B cell (primary cell): ENCODE measurements at regions of chr1 and their contacts with region 1.

Region 1: GRCh38 chr1:206663832-206664652 is 20.7 kb upstream of the MAPKAPK2 start:
- DNase-seq: peak; percentile 86
- ATAC-seq: peak; percentile 80
- H3K4me3 ChIP-seq: peak overlapping the region in 2 of 5 experiments; percentile 31 to 34
- H3K4me3 Mint-ChIP-seq: peak overlapping the region; percentile 64
- H3K27ac ChIP-seq: no peak overlapping the region
- H3K27ac Mint-ChIP-seq: no peak overlapping the region
- H3K4me1 ChIP-seq: peaks cover 14 to 16% of the 10 kb centered on the region in 2 donors
- H3K4me1 Mint-ChIP-seq: peaks cover 24% of the 10 kb centered on the region
- H3K27me3 ChIP-seq: peaks cover 0 to 48% (median 15%) of the 10 kb centered on the region in 4 experiments
- H3K27me3 Mint-ChIP-seq: peaks cover 40% of the 10 kb centered on the region
- CTCF ChIP-seq: peak; percentile 89

Region 2: GRCh38 chr1:206489980-206490770 is 173.9 kb before region 1 on chr1:
- CTCF ChIA-PET with region 1: interaction called, 26 read pairs
- POLR2A ChIA-PET with region 1: no interaction called
- intact Hi-C with region 1: loop called (anchors 1 kb)
- DNase-seq: peak; percentile 73
- ATAC-seq: peak; percentile 80
- H3K4me3 ChIP-seq: no peak overlapping the region
- H3K4me3 Mint-ChIP-seq: no peak overlapping the region
- H3K27ac ChIP-seq: no peak overlapping the region
- H3K27ac Mint-ChIP-seq: no peak overlapping the region
- H3K4me1 ChIP-seq: peaks cover 4 to 5% of the 10 kb centered on the region in 2 donors
- H3K4me1 Mint-ChIP-seq: peaks cover 7% of the 10 kb centered on the region
- H3K27me3 ChIP-seq: no peaks in the 10 kb centered on the region
- H3K27me3 Mint-ChIP-seq: no peaks in the 10 kb centered on the region
- CTCF ChIP-seq: peak; percentile 83

Region 3: DNA sequence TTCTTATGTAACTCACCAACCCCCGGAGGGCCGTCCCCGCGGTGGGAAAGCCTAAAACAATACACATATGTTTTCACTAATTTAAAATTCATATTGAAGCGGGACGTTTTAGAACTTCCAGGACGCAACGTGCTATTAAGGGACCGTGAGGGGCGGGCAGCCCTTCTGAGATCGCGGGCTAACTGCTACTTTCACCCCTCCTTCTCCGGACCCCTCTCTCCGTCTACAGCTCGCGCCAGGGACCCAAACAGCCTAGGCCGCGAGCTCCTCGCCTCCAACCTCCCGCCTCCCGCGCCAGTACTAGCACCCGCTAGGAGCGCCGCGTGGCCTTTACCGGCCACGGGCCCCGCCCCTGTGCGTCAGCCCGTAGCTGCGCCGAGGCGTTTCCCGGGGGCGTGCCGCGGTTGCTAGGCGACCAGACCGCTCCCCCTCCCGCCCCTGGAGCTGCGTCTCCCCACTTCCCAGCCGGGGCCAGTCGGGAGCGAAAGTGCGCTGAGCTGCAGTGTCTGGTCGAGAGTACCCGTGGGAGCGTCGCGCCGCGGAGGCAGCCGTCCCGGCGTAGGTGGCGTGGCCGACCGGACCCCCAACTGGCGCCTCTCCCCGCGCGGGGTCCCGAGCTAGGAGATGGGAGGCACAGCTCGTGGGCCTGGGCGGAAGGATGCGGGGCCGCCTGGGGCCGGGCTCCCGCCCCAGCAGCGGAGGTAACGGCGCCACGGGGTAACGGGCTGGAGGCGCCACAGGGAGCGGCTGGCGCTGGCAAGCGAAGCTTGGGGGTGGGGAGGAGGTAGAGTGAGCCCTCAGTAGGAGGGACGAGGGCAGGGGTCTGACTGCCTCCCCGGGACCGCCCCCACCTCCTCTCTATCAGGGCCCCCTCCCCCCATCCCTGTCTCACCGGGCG is 28.7 kb before region 1 on chr1 and contains the start of gene DYRK3:
- CTCF ChIA-PET with region 1: interaction called, 215 read pairs
- POLR2A ChIA-PET with region 1: no interaction called
- intact Hi-C with region 1: loop called (anchors 1 kb)
- DNase-seq: peak; percentile 89
- ATAC-seq: peak; percentile 93
- H3K4me3 ChIP-seq: peak within 1 kb of the TSS; percentile 54 to 77 (median 67)
- H3K4me3 Mint-ChIP-seq: peak within 1 kb of the TSS; percentile 92
- H3K27ac ChIP-seq: no peak within 1 kb of the TSS
- H3K27ac Mint-ChIP-seq: peak within 1 kb of the TSS; percentile 74
- H3K4me1 ChIP-seq: peaks cover 17 to 22% of the 10 kb centered on the region in 2 donors
- H3K4me1 Mint-ChIP-seq: peaks cover 29% of the 10 kb centered on the region
- H3K27me3 ChIP-seq: peaks cover 0 to 11% (median 7%) of the 10 kb centered on the region in 4 experiments
- H3K27me3 Mint-ChIP-seq: peaks cover 7% of the 10 kb centered on the region
- CTCF ChIP-seq: no peak
- total RNA-seq, gene DYRK3: 0.30 and 0.80 TPM in 2 replicates

Region 4: GRCh38 chr1:206693029-206693428 is 29.0 kb after region 1 on chr1:
- CTCF ChIA-PET with region 1: interaction called, 21 read pairs
- POLR2A ChIA-PET with region 1: interaction called, 3 read pairs
- intact Hi-C with region 1: no loop called
- DNase-seq: no peak
- ATAC-seq: no peak
- H3K4me3 ChIP-seq: no peak overlapping the region
- H3K4me3 Mint-ChIP-seq: no peak overlapping the region
- H3K27ac ChIP-seq: no peak overlapping the region
- H3K27ac Mint-ChIP-seq: peak overlapping the region; percentile 67
- H3K4me1 ChIP-seq: peaks cover 33 to 36% of the 10 kb centered on the region in 2 donors
- H3K4me1 Mint-ChIP-seq: peaks cover 88% of the 10 kb centered on the region
- H3K27me3 ChIP-seq: no peaks in the 10 kb centered on the region
- H3K27me3 Mint-ChIP-seq: no peaks in the 10 kb centered on the region
- CTCF ChIP-seq: no peak

Region 5: GRCh38 chr1:206734499-206735142 is 70.6 kb after region 1 on chr1:
- CTCF ChIA-PET with region 1: interaction called, 15 read pairs
- POLR2A ChIA-PET with region 1: no interaction called
- intact Hi-C with region 1: no loop called
- DNase-seq: peak; percentile 80
- ATAC-seq: peak; percentile 80
- H3K4me3 ChIP-seq: no peak overlapping the region
- H3K4me3 Mint-ChIP-seq: no peak overlapping the region
- H3K27ac ChIP-seq: no peak overlapping the region
- H3K27ac Mint-ChIP-seq: peak overlapping the region; percentile 69
- H3K4me1 ChIP-seq: peaks cover 20 to 37% of the 10 kb centered on the region in 2 donors
- H3K4me1 Mint-ChIP-seq: peaks cover 45% of the 10 kb centered on the region
- H3K27me3 ChIP-seq: no peaks in the 10 kb centered on the region
- H3K27me3 Mint-ChIP-seq: no peaks in the 10 kb centered on the region
- CTCF ChIP-seq: peak; percentile 86

Region 6: DNA sequence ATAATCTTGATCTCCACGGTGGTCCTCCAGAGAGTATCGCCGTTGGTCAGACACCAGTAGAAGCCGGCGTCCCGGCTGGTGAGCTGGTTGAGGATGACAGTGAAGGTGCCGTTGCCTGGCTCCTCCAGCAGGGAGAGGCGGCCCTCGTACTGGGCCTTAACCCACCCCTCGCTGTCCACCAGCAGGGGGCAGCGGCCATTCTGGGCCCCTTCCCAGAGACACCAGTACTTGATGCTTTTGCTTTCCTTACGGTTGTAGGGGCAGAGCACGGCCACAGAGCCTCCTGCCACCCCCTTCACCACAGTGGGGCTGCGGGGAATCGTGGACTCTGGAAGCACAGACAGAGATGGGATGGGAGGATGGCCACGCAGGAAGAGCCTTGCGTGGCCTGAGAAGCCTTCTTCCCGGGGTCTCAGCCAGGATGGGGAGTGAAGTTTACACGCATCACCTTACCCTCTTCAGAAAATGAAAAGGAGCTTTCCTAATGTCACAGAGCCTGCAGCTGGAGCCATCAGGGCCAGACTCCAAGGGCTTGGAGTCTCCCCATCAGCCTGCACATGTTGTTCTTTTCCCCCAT is 271.5 kb after region 1 on chr1:
- CTCF ChIA-PET with region 1: interaction called, 18 read pairs
- POLR2A ChIA-PET with region 1: no interaction called
- intact Hi-C with region 1: no loop called
- DNase-seq: peak; percentile 59
- ATAC-seq: peak; percentile 14
- H3K4me3 ChIP-seq: no peak overlapping the region
- H3K4me3 Mint-ChIP-seq: no peak overlapping the region
- H3K27ac ChIP-seq: no peak overlapping the region
- H3K27ac Mint-ChIP-seq: no peak overlapping the region
- H3K4me1 ChIP-seq: peaks cover 27 to 30% of the 10 kb centered on the region in 2 donors
- H3K4me1 Mint-ChIP-seq: peaks cover 30% of the 10 kb centered on the region
- H3K27me3 ChIP-seq: no peaks in the 10 kb centered on the region
- H3K27me3 Mint-ChIP-seq: no peaks in the 10 kb centered on the region
- CTCF ChIP-seq: peak; percentile 51